Activated T-helper 1 cell treated with anti-CD3 and anti-CD28 coated beads, Interleukin-12 subunit alpha, Interleukin-12 subunit beta, Interleukin-2, Interleukin-4 antibody, amounts not matched to agents 30 ng/mL and 10 ng/mL and 1 ng/mL, durations not matched to agents 14 hours and 24 hours and 36 hours (primary cell): ENCODE measurements at regions of chr16 and their contacts with region 1.

Region 1: DNA sequence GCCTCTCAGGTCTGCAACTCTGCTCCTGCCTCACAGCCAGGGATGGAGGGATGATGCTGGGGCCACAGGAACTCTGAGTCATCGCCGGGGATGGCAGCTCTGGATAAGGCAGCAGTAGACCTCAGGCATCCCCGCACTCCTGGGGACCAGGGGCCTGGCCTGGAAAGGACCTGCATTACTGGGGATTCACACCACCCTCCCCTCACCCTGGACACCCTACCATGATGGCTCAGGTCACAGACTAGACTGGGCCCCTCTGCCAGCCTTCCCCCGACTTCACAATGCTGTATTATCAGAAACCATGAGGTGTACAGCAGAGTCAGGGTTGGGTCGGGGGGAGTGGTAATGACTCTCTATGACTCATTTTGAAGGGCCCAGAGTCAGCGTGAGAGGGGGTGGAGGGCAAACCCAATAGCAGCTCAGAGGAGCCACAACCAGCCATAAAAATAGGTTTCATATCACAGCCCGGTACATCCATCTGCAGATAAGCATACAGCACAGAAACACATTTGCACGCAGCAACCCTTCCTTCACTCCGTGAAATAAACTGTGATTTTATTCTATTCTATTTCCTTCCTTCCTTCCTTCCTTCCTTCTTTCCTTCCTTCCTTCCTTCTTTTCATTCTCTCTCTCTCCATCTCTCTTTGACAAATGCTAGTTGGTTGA is 28.8 kb downstream of the DYNLRB2 start:
- DNase-seq: peak; percentile 74
- H3K4me3 Mint-ChIP-seq: peak overlapping the region; percentile 51
- H3K27ac Mint-ChIP-seq: peak overlapping the region; percentile 93
- H3K4me1 Mint-ChIP-seq: peaks cover 60% of the 10 kb centered on the region
- H3K27me3 Mint-ChIP-seq: no peaks in the 10 kb centered on the region

Region 2: DNA sequence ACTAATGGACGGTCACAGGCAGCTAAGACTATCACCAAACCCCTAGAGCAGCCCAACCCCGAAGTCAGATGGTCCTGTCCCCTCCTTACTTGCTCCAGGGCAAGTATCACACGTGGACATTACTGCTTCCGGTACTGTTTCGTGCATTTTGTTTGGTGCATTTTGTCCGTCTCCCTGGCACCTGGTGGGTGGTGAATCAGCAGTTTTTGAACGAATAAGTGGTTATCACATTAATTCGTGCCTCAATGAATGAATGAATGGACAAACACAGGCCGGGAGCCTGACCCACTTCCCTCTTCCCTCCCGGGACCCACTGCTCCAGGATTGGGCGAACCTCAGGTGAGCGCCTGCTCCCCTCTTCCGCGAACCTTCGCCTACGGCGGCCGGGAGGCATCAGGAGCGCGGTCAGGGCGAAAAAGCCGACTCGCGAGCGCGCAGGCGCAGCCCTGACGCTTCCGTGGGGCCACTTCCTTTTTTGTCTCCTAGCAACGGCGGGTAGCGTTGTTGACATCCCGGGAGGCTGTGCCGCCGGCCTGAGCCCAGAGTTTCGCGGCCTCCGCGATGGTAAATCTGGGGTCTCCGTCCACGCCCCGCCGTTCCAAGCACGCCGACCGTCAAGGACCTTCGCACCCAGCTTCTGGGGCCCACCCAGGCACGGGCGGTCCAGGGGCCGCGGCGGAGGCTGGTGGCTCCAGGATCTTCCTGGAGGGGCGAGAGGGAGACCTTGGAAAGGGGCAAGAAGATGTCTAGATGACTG is 28.9 kb before region 1 on chr16 and contains the start of gene DYNLRB2:
- intact Hi-C with region 1: loop called (anchors 1 kb)
- DNase-seq: peak; percentile 92
- H3K4me3 Mint-ChIP-seq: peak within 1 kb of the TSS; percentile 87
- H3K27ac Mint-ChIP-seq: peak within 1 kb of the TSS; percentile 96
- H3K4me1 Mint-ChIP-seq: peaks cover 38% of the 10 kb centered on the region
- H3K27me3 Mint-ChIP-seq: peaks cover 2% of the 10 kb centered on the region
- total RNA-seq, gene DYNLRB2: not detected in 2 replicates